Activated T-helper 1 cell treated with anti-CD3 and anti-CD28 coated beads, Interleukin-12 subunit alpha, Interleukin-12 subunit beta, Interleukin-2, Interleukin-4 antibody, amounts not matched to agents 30 ng/mL and 10 ng/mL and 1 ng/mL, durations not matched to agents 14 hours and 24 hours and 36 hours (primary cell): ENCODE measurements at regions of chr19 and their contacts with region 1.

Region 1: DNA sequence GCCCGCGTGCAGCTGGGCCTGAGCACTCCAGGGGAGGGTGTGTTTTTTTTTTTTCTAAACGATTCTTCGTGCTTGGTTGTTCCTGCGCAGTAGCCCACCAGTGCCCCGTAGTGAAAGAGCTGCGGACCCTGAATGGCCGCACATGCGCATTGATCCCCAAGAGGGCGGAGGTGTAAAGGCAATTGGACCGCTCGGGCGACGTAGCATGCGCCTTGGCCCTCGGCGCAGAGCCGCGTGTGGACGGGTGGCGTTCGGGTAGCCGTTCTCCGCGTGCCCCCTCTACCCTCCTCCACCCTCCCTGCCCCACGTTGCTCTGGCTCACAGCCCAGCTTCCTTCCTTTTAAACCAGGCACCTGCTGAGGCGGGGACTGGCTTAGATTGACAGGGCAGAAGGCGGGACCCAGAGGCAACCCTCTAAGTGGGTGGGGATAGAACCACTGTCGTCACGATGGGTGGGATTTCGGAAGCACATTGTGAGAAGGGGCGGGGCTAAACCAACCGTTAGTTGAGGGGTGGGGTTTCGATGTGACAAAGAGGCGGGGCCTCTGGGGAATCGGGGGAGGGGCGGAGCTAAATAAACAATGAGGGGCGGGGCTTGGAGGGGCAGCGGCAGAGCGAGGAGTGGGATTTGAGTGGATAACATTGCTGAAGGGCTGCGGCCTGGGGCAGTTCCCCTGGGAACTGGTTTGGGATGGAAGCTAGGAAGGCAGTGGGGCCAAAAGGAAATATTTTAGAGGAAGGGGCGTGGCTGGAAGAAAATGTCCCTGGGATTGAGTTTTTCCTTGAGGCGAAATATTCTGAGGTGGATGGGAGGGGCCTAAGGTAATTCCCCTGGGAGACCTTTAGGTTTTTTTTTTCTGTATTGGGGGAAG is 543 bp upstream of the NUP62 start:
- DNase-seq: peak; percentile 89
- H3K4me3 Mint-ChIP-seq: peak overlapping the region; percentile 97
- H3K27ac Mint-ChIP-seq: peak overlapping the region; percentile 100
- H3K4me1 Mint-ChIP-seq: peaks cover 49% of the 10 kb centered on the region
- H3K27me3 Mint-ChIP-seq: peaks cover 2% of the 10 kb centered on the region

Region 2: GRCh38 chr19:49766007-49766937 is 163.6 kb before region 1 on chr19:
- intact Hi-C with region 1: loop called (anchors 1 kb)
- DNase-seq: peak; percentile 99
- H3K4me3 Mint-ChIP-seq: peak overlapping the region; percentile 89
- H3K27ac Mint-ChIP-seq: peak overlapping the region; percentile 91
- H3K4me1 Mint-ChIP-seq: peaks cover 24% of the 10 kb centered on the region
- H3K27me3 Mint-ChIP-seq: no peaks in the 10 kb centered on the region

Region 3: GRCh38 chr19:49850473-49851342 is 79.1 kb before region 1 on chr19 and contains the start of gene PTOV1:
- intact Hi-C with region 1: loop called (anchors 1 kb)
- DNase-seq: peak; percentile 88
- H3K4me3 Mint-ChIP-seq: peak within 1 kb of the TSS; percentile 89
- H3K27ac Mint-ChIP-seq: peak within 1 kb of the TSS; percentile 92
- H3K4me1 Mint-ChIP-seq: peaks cover 38% of the 10 kb centered on the region
- H3K27me3 Mint-ChIP-seq: peaks cover 5% of the 10 kb centered on the region
- total RNA-seq, gene PTOV1: 107 and 113 TPM in 2 replicates

Region 4: GRCh38 chr19:49889687-49890348 is 40.0 kb before region 1 on chr19:
- intact Hi-C with region 1: loop called (anchors 1 kb)
- DNase-seq: peak; percentile 74
- H3K4me3 Mint-ChIP-seq: peak overlapping the region; percentile 80
- H3K27ac Mint-ChIP-seq: peak overlapping the region; percentile 77
- H3K4me1 Mint-ChIP-seq: peaks cover 13% of the 10 kb centered on the region
- H3K27me3 Mint-ChIP-seq: peaks cover 1% of the 10 kb centered on the region

Region 5: GRCh38 chr19:49911381-49912145 is 18.3 kb before region 1 on chr19:
- intact Hi-C with region 1: loop called (anchors 1 kb)
- DNase-seq: no peak
- H3K4me3 Mint-ChIP-seq: peak overlapping the region; percentile 75
- H3K27ac Mint-ChIP-seq: peak overlapping the region; percentile 96
- H3K4me1 Mint-ChIP-seq: peaks cover 63% of the 10 kb centered on the region
- H3K27me3 Mint-ChIP-seq: no peaks in the 10 kb centered on the region

Region 6: GRCh38 chr19:50003810-50004419 is 74.1 kb after region 1 on chr19:
- intact Hi-C with region 1: loop called (anchors 1 kb)
- DNase-seq: peak; percentile 11
- H3K4me3 Mint-ChIP-seq: peak overlapping the region; percentile 15
- H3K27ac Mint-ChIP-seq: peak overlapping the region; percentile 62
- H3K4me1 Mint-ChIP-seq: peaks cover 33% of the 10 kb centered on the region
- H3K27me3 Mint-ChIP-seq: no peaks in the 10 kb centered on the region

Region 7: GRCh38 chr19:50016225-50016807 is 86.5 kb after region 1 on chr19:
- intact Hi-C with region 1: no loop called
- DNase-seq: no peak
- H3K4me3 Mint-ChIP-seq: no peak overlapping the region
- H3K27ac Mint-ChIP-seq: no peak overlapping the region
- H3K4me1 Mint-ChIP-seq: peaks cover 7% of the 10 kb centered on the region
- H3K27me3 Mint-ChIP-seq: no peaks in the 10 kb centered on the region

Region 8: GRCh38 chr19:50639121-50640112 is 709.6 kb after region 1 on chr19 and contains the start of gene SYT3:
- intact Hi-C with region 1: no loop called
- DNase-seq: no peak
- H3K4me3 Mint-ChIP-seq: no peak within 1 kb of the TSS
- H3K27ac Mint-ChIP-seq: no peak within 1 kb of the TSS
- H3K4me1 Mint-ChIP-seq: no peaks in the 10 kb centered on the region
- H3K27me3 Mint-ChIP-seq: peaks cover 29% of the 10 kb centered on the region
- total RNA-seq, gene SYT3: not detected in 2 replicates